ENCODE measurements at regions of chr2 and their contacts with region 1.

Region 1: DNA sequence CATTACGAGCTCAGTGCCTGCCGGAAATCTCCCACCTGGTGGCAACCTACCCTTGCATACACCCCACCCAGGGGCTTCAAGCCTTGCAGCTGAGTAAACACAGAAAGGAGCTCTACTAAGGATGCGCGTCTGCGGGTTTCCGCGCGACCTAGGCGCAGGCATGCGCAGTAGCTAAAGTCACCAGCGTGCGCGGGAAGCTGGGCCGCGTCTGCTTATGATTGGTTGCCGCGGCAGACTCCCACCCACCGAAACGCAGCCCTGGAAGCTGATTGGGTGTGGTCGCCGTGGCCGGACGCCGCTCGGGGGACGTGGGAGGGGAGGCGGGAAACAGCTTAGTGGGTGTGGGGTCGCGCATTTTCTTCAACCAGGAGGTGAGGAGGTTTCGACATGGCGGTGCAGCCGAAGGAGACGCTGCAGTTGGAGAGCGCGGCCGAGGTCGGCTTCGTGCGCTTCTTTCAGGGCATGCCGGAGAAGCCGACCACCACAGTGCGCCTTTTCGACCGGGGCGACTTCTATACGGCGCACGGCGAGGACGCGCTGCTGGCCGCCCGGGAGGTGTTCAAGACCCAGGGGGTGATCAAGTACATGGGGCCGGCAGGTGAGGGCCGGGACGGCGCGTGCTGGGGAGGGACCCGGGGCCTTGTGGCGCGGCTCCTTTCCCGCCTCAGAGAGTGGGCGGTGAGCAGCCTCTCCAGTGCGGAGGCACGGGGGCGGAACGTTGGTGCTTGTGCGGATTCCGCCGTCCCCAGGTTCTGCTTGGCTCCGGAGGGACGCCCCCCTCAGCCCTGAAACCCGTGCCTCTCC is at the start of gene MSH2:
- DNase-seq: peak; percentile 86
- ATAC-seq: peak; percentile 97
- H3K4me3 ChIP-seq: peak within 1 kb of the TSS; percentile 83
- H3K27ac ChIP-seq: peak within 1 kb of the TSS; percentile 85
- H3K4me1 ChIP-seq: peaks cover 6% of the 10 kb centered on the region
- H3K27me3 ChIP-seq: no peaks in the 10 kb centered on the region; a peak in 1 of 4 replicates
- CTCF ChIP-seq: no peak
- EP300 ChIP-seq: 0 out of 4 replicates have a peak, but pooled peaks of 1 of the 2 experiments have one; percentile 17
- POLR2A ChIP-seq: peak; percentile 88
- RAD21 ChIP-seq: no peak
- polyA plus RNA-seq, gene MSH2: 24.3 to 31.3 TPM

Region 2: DNA sequence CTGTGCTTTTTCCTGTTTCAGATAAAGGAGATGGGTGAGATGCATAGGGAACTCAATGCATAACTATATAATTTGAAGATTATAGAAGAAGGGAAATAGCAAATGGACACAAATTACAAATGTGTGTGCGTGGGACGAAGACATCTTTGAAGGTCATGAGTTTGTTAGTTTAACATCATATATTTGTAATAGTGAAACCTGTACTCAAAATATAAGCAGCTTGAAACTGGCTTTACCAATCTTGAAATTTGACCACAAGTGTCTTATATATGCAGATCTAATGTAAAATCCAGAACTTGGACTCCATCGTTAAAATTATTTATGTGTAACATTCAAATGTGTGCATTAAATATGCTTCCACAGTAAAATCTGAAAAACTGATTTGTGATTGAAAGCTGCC is 16.5 kb before region 1 on chr2:
- CTCF ChIA-PET with region 1: interaction called, 19 read pairs
- POLR2A ChIA-PET with region 1: interaction called, 4 read pairs
- RAD21 ChIA-PET with region 1: interaction called, 13 read pairs
- SMC1A ChIA-PET with region 1: no interaction called
- in situ Hi-C with region 1: no loop called
- intact Hi-C with region 1: no loop called
- DNase-seq: no peak
- ATAC-seq: peak; percentile 61
- H3K4me3 ChIP-seq: no peak overlapping the region
- H3K27ac ChIP-seq: no peak overlapping the region
- H3K4me1 ChIP-seq: peaks cover 3% of the 10 kb centered on the region; the same call in 1 of the 2 replicates
- H3K27me3 ChIP-seq: peaks cover 0 to 3% of the 10 kb centered on the region in 2 experiments; a peak in 1 of 4 replicates
- CTCF ChIP-seq: no peak
- EP300 ChIP-seq: no peak
- POLR2A ChIP-seq: no peak
- RAD21 ChIP-seq: no peak

Measured in GM12878 (cell line).